MCF 10A (cell line): ENCODE measurements at regions of chr7 and their contacts with region 1.

Region 1: DNA sequence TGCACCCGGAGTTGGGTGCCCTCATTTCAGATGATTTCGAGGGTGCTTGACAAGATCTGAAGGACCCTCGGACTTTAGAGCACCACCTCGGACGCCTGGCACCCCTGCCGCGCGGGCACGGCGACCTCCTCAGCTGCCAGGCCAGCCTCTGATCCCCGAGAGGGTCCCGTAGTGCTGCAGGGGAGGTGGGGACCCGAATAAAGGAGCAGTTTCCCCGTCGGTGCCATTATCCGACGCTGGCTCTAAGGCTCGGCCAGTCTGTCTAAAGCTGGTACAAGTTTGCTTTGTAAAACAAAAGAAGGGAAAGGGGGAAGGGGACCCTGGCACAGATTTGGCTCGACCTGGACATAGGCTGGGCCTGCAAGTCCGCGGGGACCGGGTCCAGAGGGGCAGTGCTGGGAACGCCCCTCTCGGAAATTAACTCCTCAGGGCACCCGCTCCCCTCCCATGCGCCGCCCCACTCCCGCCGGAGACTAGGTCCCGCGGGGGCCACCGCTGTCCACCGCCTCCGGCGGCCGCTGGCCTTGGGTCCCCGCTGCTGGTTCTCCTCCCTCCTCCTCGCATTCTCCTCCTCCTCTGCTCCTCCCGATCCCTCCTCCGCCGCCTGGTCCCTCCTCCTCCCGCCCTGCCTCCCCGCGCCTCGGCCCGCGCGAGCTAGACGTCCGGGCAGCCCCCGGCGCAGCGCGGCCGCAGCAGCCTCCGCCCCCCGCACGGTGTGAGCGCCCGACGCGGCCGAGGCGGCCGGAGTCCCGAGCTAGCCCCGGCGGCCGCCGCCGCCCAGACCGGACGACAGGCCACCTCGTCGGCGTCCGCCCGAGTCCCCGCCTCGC is at the start of gene EGFR:
- DNase-seq: peak; percentile 80
- H3K4me3 Mint-ChIP-seq: peak within 1 kb of the TSS; percentile 86
- H3K27ac Mint-ChIP-seq: peak within 1 kb of the TSS; percentile 93
- H3K4me1 Mint-ChIP-seq: no peaks in the 10 kb centered on the region
- H3K27me3 Mint-ChIP-seq: no peaks in the 10 kb centered on the region
- CTCF ChIP-seq: no peak
- total RNA-seq, gene EGFR: 371 and 448 TPM in 2 replicates

Region 2: DNA sequence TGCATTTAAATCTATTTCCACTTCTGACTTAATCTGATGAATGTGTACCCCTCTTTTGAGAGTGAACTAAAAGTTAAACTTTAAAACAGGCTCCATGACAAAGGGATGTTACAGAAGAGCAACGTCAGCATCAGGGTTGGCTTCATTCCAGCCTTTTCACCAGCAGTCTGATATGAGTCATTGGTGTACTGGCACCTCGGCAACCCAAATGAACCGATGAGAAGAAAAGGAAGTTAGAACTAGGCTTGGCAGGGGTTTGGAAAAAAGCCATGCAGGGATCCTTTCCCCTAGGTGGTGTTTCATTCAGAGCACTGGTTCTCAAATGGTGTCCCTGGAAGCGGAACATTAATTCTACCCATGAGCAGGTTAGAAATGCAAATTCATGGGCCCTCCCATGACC is 313.1 kb before region 1 on chr7:
- CTCF ChIA-PET with region 1: no interaction called
- POLR2A ChIA-PET with region 1: no interaction called
- intact Hi-C with region 1: no loop called
- DNase-seq: peak; percentile 91
- H3K4me3 Mint-ChIP-seq: no peak overlapping the region
- H3K27ac Mint-ChIP-seq: peak overlapping the region; percentile 7
- H3K4me1 Mint-ChIP-seq: peaks cover 6% of the 10 kb centered on the region
- H3K27me3 Mint-ChIP-seq: peaks cover 11% of the 10 kb centered on the region
- CTCF ChIP-seq: no peak

Region 3: DNA sequence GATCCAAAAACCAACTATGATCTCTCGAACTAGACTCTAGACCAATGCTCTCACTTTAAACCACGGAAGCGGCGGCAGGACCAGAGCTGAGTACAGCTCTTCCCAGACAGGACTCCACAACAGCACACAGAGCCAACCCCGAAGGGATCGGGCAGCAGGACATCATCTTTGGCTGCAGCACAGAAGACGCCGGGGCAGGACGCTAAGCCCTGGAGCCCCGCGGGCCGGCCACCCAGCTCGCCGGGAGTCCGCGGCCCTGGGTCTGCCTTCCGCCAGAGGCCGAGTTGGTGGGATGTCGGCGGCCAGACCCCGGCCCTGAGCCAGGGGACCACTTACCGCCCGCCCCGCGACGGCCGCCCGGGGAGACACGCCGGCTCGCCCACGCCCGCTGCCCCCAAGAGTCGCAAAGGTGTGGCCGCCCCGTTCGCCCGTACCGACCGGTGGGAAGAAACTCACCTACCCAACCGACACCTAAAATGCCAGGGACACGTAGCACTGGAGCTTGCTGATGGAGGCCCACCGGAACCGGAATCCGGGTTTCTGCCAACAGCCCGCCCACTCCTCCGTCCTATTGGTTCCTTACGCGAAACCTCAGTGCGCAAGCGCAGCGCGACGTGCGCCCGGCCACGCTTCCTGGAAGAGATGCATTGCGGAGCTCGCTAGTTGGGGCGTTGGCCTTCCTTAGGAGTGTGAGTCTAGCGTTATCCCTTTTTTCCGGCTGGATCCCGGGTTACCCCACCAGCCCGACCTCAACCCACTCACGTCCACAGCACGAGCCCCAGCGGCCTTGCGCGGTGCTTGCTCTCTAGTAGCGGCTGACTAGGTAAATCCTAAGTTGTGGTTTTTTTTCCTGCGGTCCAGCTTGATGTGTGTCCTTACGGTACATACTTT is 259.6 kb before region 1 on chr7 and contains the start of gene SEC61G:
- CTCF ChIA-PET with region 1: interaction called, 5 read pairs
- POLR2A ChIA-PET with region 1: interaction called, 24 read pairs
- intact Hi-C with region 1: no loop called
- DNase-seq: peak; percentile 97
- H3K4me3 Mint-ChIP-seq: peak within 1 kb of the TSS; percentile 94
- H3K27ac Mint-ChIP-seq: peak within 1 kb of the TSS; percentile 96
- H3K4me1 Mint-ChIP-seq: peaks cover 5% of the 10 kb centered on the region
- H3K27me3 Mint-ChIP-seq: no peaks in the 10 kb centered on the region
- CTCF ChIP-seq: no peak
- total RNA-seq, gene SEC61G: 246 and 490 TPM in 2 replicates

Region 4: GRCh38 chr7:54839538-54840213 is 178.9 kb before region 1 on chr7:
- CTCF ChIA-PET with region 1: interaction called, 3 read pairs
- POLR2A ChIA-PET with region 1: interaction called, 5 read pairs
- intact Hi-C with region 1: loop called (anchors 1 kb)
- DNase-seq: peak; percentile 81
- H3K4me3 Mint-ChIP-seq: no peak overlapping the region
- H3K27ac Mint-ChIP-seq: no peak overlapping the region
- H3K4me1 Mint-ChIP-seq: peaks cover 29% of the 10 kb centered on the region
- H3K27me3 Mint-ChIP-seq: no peaks in the 10 kb centered on the region
- CTCF ChIP-seq: peak; percentile 80

Region 5: DNA sequence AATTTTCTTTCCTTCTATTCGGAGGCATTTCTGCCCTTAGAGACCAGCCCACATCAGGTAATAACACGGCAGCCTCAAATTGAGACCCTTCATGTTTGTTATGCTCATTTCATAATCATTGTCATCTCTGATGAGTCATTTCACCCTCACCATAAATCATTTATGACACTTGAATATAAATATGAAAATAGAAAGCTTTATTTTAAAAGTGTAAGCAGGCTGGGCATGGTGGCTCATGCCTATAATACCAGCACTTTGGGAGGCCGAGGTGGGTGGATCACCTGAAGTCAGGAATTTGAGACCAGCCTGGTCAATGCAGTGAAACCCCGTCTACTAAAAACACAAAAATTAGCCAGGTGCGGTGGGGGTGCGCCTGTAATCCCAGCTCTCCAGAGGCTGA is 57.2 kb before region 1 on chr7:
- CTCF ChIA-PET with region 1: interaction called, 5 read pairs
- POLR2A ChIA-PET with region 1: interaction called, 170 read pairs
- intact Hi-C with region 1: no loop called
- DNase-seq: peak; percentile 67
- H3K4me3 Mint-ChIP-seq: no peak overlapping the region
- H3K27ac Mint-ChIP-seq: peak overlapping the region; percentile 77
- H3K4me1 Mint-ChIP-seq: peaks cover 30% of the 10 kb centered on the region
- H3K27me3 Mint-ChIP-seq: no peaks in the 10 kb centered on the region
- CTCF ChIP-seq: no peak

Region 6: GRCh38 chr7:55030314-55030713 is 11.7 kb after region 1 on chr7:
- CTCF ChIA-PET with region 1: interaction called, 4 read pairs
- POLR2A ChIA-PET with region 1: interaction called, 30 read pairs
- intact Hi-C with region 1: no loop called
- DNase-seq: no peak
- H3K4me3 Mint-ChIP-seq: no peak overlapping the region
- H3K27ac Mint-ChIP-seq: no peak overlapping the region
- H3K4me1 Mint-ChIP-seq: peaks cover 61% of the 10 kb centered on the region
- H3K27me3 Mint-ChIP-seq: no peaks in the 10 kb centered on the region
- CTCF ChIP-seq: no peak

Region 7: DNA sequence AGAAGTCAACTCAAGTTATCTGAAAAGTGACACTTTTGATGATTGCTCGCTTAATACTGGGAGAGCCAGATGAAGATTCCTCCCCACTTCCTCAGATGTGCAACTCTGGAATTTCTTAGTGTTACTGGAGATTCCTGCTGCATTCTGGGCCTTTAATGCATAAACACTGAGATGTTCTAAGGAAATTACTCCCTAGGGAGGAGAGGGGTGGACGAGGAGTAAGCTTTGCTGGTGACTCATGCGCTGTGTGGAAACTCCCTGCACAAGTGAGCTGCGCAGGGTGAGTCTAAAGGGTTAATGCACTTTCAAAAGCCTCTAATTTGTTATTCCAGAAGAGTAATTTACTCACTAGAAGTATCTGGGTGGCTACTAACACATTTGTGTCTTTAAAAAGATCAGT is 46.5 kb after region 1 on chr7:
- CTCF ChIA-PET with region 1: interaction called, 4 read pairs
- POLR2A ChIA-PET with region 1: interaction called, 122 read pairs
- intact Hi-C with region 1: loop called (anchors 1 kb)
- DNase-seq: peak; percentile 95
- H3K4me3 Mint-ChIP-seq: peak overlapping the region; percentile 63
- H3K27ac Mint-ChIP-seq: peak overlapping the region; percentile 93
- H3K4me1 Mint-ChIP-seq: peaks cover 81% of the 10 kb centered on the region
- H3K27me3 Mint-ChIP-seq: no peaks in the 10 kb centered on the region
- CTCF ChIP-seq: no peak

Region 8: GRCh38 chr7:55132890-55133551 is 114.4 kb after region 1 on chr7:
- CTCF ChIA-PET with region 1: interaction called, 3 read pairs
- POLR2A ChIA-PET with region 1: interaction called, 34 read pairs
- intact Hi-C with region 1: loop called (anchors 1 kb)
- DNase-seq: peak; percentile 97
- H3K4me3 Mint-ChIP-seq: peak overlapping the region; percentile 44
- H3K27ac Mint-ChIP-seq: peak overlapping the region; percentile 90
- H3K4me1 Mint-ChIP-seq: peaks cover 54% of the 10 kb centered on the region
- H3K27me3 Mint-ChIP-seq: no peaks in the 10 kb centered on the region
- CTCF ChIP-seq: no peak